ENCODE measurements at regions of chr7 and their contacts with region 1.

Region 1: DNA sequence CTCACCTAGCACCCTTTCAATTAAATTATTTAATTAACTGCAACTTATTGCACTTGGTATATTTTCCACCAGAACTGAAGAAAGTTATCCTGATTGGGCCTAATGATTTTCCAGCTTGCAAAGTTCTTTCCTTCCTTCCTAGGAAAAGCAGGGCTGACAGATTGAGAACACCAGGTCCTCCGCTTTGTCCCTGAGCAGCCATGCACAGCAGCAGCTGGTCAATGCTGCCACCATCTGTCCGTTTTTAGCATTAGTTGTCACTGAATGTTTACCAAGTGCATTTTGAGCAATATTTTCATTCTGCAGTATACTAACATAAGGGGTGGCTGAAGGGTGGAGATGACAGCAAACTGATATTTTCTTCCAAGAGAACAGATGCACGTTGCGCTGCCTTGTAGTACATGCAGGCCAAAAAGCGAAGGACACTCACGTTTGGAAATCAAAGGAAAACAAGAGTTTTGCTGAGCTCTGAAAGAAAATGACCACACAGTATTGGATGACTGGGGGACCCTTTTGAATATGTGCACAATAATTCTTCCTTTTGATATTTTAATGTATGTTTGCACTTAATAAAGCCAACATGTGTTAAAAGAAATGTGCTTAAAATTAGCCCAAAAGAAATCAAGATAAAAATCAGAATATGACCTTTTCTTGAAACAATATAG is 248.8 kb upstream of the PTN start:
- DNase-seq: peak; percentile 84
- ATAC-seq: peak; percentile 88
- H3K4me3 ChIP-seq: no peak overlapping the region
- H3K27ac ChIP-seq: peak overlapping the region; percentile 91
- H3K4me1 ChIP-seq: peaks cover 17% of the 10 kb centered on the region
- H3K27me3 ChIP-seq: no peaks in the 10 kb centered on the region
- CTCF ChIP-seq: peak; percentile 93
- POLR2A ChIP-seq: peak; percentile 66
- RAD21 ChIP-seq: peak; percentile 100

Region 2: DNA sequence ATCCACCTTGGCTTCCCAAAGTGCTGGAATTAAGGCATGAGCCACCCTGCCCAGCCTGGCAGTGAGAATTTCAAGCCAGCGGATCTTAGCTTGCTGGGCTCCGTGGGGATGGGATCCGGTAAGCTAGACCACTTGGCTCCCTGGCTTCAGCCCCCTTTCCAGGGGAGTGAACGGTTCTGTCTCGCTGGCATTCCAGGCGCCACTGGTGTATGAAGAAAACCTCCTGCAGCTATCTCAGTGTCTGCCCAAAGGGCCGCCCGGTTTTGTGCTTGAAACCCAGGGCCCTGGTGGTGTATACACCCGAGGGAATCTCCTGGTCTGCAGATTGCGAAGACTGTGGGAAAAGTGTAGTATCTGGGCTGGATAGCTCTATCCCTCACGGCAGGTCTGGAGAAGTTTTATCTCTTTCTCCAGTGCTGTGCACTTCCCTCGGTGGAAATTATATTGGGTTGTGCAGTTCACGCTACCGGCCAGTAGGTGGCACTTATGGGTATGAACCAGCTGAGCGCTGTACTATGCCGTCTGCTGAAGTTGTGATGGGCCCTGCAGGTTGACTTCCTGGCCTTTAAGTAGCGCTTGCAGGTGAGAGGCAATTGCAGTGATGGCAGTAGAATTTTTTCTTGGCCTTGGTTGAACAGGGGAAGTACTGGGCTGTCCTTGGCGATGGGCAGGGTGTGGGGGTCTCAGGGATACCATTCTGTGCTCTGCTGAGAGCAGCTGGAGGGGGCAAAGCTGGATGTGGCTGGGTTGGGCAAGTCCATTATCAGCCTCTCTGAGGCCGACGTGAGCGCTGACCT is 1477.2 kb before region 1 on chr7:
- CTCF ChIA-PET with region 1: no interaction called
- POLR2A ChIA-PET with region 1: no interaction called
- dilution Hi-C with region 1: no loop called
- in situ Hi-C with region 1: no loop called
- intact Hi-C with region 1: loop called (anchors 5 kb)
- DNase-seq: peak; percentile 52
- ATAC-seq: peak; percentile 99
- H3K4me3 ChIP-seq: no peak overlapping the region
- H3K27ac ChIP-seq: no peak overlapping the region
- H3K4me1 ChIP-seq: no peaks in the 10 kb centered on the region
- H3K27me3 ChIP-seq: no peaks in the 10 kb centered on the region
- CTCF ChIP-seq: peak; percentile 68
- POLR2A ChIP-seq: no peak
- RAD21 ChIP-seq: peak; percentile 58

Region 3: DNA sequence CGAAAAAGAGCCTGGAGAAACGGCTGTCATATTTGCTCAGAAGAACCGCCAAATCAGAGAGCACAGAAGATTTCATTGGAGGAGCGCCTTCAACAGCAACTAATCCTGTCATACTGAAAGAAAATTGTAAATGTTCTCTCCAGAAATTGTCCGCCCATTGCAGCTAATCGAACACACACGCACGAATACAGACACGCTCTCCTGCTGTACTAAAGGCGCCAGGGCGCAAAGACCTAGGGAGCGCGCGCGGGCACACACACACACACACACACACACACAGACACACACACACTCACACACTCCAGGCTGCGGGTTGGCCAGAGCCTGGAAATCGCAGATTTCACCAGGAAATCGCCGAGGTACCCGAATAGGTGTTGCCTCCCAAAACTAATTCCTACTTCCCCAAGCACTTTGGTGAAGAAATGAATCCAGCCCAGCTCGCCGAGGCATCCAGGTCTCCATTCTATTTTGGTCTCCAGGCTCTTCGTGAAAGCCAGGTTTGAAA is 723.8 kb before region 1 on chr7 and contains the start of gene CHRM2:
- CTCF ChIA-PET with region 1: no interaction called
- POLR2A ChIA-PET with region 1: no interaction called
- dilution Hi-C with region 1: no loop called
- in situ Hi-C with region 1: loop called (anchors 10 kb)
- intact Hi-C with region 1: loop called (anchors 2 kb)
- DNase-seq: peak; percentile 90
- ATAC-seq: peak; percentile 56
- H3K4me3 ChIP-seq: peak within 1 kb of the TSS; percentile 95
- H3K27ac ChIP-seq: peak within 1 kb of the TSS; percentile 88
- H3K4me1 ChIP-seq: peaks cover 10% of the 10 kb centered on the region
- H3K27me3 ChIP-seq: no peaks in the 10 kb centered on the region
- CTCF ChIP-seq: no peak
- POLR2A ChIP-seq: no peak
- RAD21 ChIP-seq: no peak
- total RNA-seq, gene CHRM2: 144 and 184 TPM in 2 replicates

Region 4: GRCh38 chr7:136976504-136977251 is 615.7 kb before region 1 on chr7:
- CTCF ChIA-PET with region 1: no interaction called
- POLR2A ChIA-PET with region 1: no interaction called
- dilution Hi-C with region 1: no loop called
- in situ Hi-C with region 1: no loop called
- intact Hi-C with region 1: loop called (anchors 10 kb)
- DNase-seq: peak; percentile 68
- ATAC-seq: peak; percentile 78
- H3K4me3 ChIP-seq: no peak overlapping the region
- H3K27ac ChIP-seq: peak overlapping the region; percentile 80; the same call in 1 of the 2 replicates
- H3K4me1 ChIP-seq: peaks cover 6% of the 10 kb centered on the region
- H3K27me3 ChIP-seq: no peaks in the 10 kb centered on the region
- CTCF ChIP-seq: no peak
- POLR2A ChIP-seq: no peak
- RAD21 ChIP-seq: no peak

Region 5: GRCh38 chr7:137025469-137026175 is 566.7 kb before region 1 on chr7:
- CTCF ChIA-PET with region 1: no interaction called
- POLR2A ChIA-PET with region 1: no interaction called
- dilution Hi-C with region 1: no loop called
- in situ Hi-C with region 1: no loop called
- intact Hi-C with region 1: loop called (anchors 5 kb)
- DNase-seq: peak; percentile 93
- ATAC-seq: peak; percentile 67
- H3K4me3 ChIP-seq: no peak overlapping the region
- H3K27ac ChIP-seq: peak overlapping the region; percentile 99
- H3K4me1 ChIP-seq: peaks cover 6% of the 10 kb centered on the region
- H3K27me3 ChIP-seq: no peaks in the 10 kb centered on the region
- CTCF ChIP-seq: no peak
- POLR2A ChIP-seq: no peak
- RAD21 ChIP-seq: no peak; the same call in 1 of the 2 replicates

Region 6: GRCh38 chr7:137169282-137169698 is 423.1 kb before region 1 on chr7:
- CTCF ChIA-PET with region 1: interaction called, 34 read pairs
- POLR2A ChIA-PET with region 1: no interaction called
- dilution Hi-C with region 1: no loop called
- in situ Hi-C with region 1: loop called (anchors 5 kb)
- intact Hi-C with region 1: loop called (anchors 1 kb)
- DNase-seq: peak; percentile 85
- ATAC-seq: peak; percentile 98
- H3K4me3 ChIP-seq: no peak overlapping the region
- H3K27ac ChIP-seq: no peak overlapping the region; the same call in 1 of the 2 replicates
- H3K4me1 ChIP-seq: peaks cover 5% of the 10 kb centered on the region
- H3K27me3 ChIP-seq: no peaks in the 10 kb centered on the region
- CTCF ChIP-seq: peak; percentile 77
- POLR2A ChIP-seq: no peak
- RAD21 ChIP-seq: peak; percentile 92

Region 7: DNA sequence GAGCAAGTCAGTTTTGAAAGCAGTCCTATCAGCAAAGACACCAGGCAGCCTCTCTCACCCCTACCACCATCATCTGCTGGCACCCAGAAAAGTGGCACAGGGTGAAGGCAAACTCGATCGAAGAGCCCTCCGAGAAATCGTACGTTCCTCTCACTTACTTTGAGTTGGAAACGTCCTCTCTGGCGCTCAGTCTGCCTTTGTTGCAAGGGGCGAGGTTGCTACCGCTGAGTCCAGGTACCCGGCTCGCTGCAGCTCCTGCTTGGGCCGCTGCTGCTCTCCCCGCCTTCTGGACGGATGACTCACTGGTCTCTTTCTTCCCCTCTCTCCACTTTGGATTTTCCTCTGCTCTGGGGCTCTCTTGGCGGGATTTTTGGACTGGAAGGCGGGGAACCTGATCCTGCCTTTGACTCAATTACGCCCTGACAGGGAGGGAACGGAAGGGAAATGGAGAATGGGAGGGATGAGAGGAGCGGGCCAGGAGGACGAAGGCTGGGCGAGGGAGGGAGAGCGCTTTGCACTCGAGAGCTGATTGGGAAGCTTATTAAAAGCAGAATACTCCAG is 249.0 kb before region 1 on chr7 and contains the start of gene PTN:
- CTCF ChIA-PET with region 1: no interaction called
- POLR2A ChIA-PET with region 1: no interaction called
- dilution Hi-C with region 1: no loop called
- in situ Hi-C with region 1: no loop called
- intact Hi-C with region 1: loop called (anchors 5 kb)
- DNase-seq: peak; percentile 79
- ATAC-seq: peak; percentile 93
- H3K4me3 ChIP-seq: peak within 1 kb of the TSS; percentile 79
- H3K27ac ChIP-seq: peak within 1 kb of the TSS; percentile 63
- H3K4me1 ChIP-seq: no peaks in the 10 kb centered on the region; the same call in 1 of the 2 replicates
- H3K27me3 ChIP-seq: no peaks in the 10 kb centered on the region
- CTCF ChIP-seq: no peak
- POLR2A ChIP-seq: no peak
- RAD21 ChIP-seq: no peak; the same call in 1 of the 2 replicates
- total RNA-seq, gene PTN: 61.7 and 86.7 TPM in 2 replicates

Region 8: GRCh38 chr7:137619181-137619580 is 26.8 kb after region 1 on chr7:
- CTCF ChIA-PET with region 1: no interaction called
- POLR2A ChIA-PET with region 1: no interaction called
- dilution Hi-C with region 1: no loop called
- in situ Hi-C with region 1: no loop called
- intact Hi-C with region 1: no loop called
- DNase-seq: no peak
- ATAC-seq: no peak
- H3K4me3 ChIP-seq: no peak overlapping the region
- H3K27ac ChIP-seq: no peak overlapping the region
- H3K4me1 ChIP-seq: no peaks in the 10 kb centered on the region
- H3K27me3 ChIP-seq: no peaks in the 10 kb centered on the region
- CTCF ChIP-seq: no peak
- POLR2A ChIP-seq: no peak
- RAD21 ChIP-seq: no peak

Region 9: GRCh38 chr7:138267934-138268333 is 675.6 kb after region 1 on chr7:
- CTCF ChIA-PET with region 1: no interaction called
- POLR2A ChIA-PET with region 1: no interaction called
- dilution Hi-C with region 1: no loop called
- in situ Hi-C with region 1: no loop called
- intact Hi-C with region 1: no loop called
- DNase-seq: no peak
- ATAC-seq: no peak
- H3K4me3 ChIP-seq: no peak overlapping the region
- H3K27ac ChIP-seq: no peak overlapping the region
- H3K4me1 ChIP-seq: no peaks in the 10 kb centered on the region
- H3K27me3 ChIP-seq: no peaks in the 10 kb centered on the region
- CTCF ChIP-seq: no peak
- POLR2A ChIP-seq: no peak
- RAD21 ChIP-seq: no peak

Measured in IMR-90 (cell line).